Endothelial cell of umbilical vein (primary cell): ENCODE measurements at regions of chr19 and their contacts with region 1.

Region 1: DNA sequence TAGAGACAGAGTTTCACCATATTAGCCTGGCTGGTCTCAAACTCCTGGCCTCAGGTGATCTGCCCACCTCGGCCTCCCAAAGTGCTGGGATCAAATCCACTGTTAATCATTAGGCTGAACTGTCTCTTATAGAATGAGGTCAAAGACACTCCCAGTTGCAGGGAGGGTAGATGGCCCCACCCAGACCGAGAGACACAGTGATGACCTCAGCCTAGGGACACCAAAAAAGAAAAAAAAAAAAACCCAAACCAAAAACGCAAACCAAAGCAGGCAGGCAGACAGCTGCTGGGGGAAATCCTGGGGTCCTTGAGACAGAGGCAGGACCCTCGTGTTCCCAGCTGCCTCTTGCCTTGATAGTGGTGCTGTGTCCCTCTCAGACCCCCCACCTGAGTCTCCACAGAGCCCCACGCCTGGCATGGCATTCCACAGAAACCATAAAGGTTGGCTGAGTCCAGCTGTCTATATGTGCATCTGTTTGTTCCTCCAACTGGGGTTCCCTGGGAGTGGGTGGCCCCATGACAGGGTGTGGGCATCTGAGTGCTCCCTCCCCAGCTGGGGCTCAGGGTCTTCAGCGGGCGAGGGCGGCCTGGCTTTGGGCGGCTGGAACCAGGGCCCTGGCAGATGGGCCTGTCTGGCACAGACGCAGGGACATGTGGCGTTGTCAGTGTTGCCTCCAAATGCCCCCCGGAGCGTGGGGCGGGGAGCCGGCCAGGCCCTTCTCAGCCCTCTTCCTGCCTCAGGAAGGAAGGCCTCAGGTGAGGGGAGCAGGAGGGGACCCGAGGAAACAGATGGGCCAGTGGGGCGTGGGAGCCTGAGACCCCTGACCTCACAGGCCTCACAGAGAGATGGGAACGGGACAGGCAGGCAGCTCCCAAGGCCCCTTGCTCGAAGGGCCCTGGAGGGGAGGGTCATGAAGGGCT is 5.2 kb downstream of the DAND5 start:
- DNase-seq: no peak
- H3K4me3 ChIP-seq: no peak overlapping the region
- H3K27ac ChIP-seq: no peak overlapping the region
- H3K4me1 ChIP-seq: no peaks in the 10 kb centered on the region
- H3K27me3 ChIP-seq: no peaks in the 10 kb centered on the region
- CTCF ChIP-seq: no peak
- POLR2A ChIP-seq: no peak

Region 2: GRCh38 chr19:13022859-13023636 is 48.5 kb after region 1 on chr19:
- CTCF ChIA-PET with region 1: interaction called, 13 read pairs
- POLR2A ChIA-PET with region 1: no interaction called
- dilution Hi-C with region 1: no loop called
- intact Hi-C with region 1: no loop called
- DNase-seq: peak; percentile 80
- H3K4me3 ChIP-seq: peak overlapping the region; percentile 28 to 84 (median 59)
- H3K27ac ChIP-seq: peak overlapping the region; percentile 33
- H3K4me1 ChIP-seq: peaks cover 52% of the 10 kb centered on the region
- H3K27me3 ChIP-seq: no peaks in the 10 kb centered on the region
- CTCF ChIP-seq: no peak
- POLR2A ChIP-seq: peak; percentile 31

Region 3: GRCh38 chr19:13082192-13083007 is 107.8 kb after region 1 on chr19:
- CTCF ChIA-PET with region 1: interaction called, 76 read pairs
- POLR2A ChIA-PET with region 1: no interaction called
- dilution Hi-C with region 1: no loop called
- intact Hi-C with region 1: loop called (anchors 1 kb)
- DNase-seq: peak; percentile 57
- H3K4me3 ChIP-seq: no peak overlapping the region
- H3K27ac ChIP-seq: no peak overlapping the region
- H3K4me1 ChIP-seq: peaks cover 4% of the 10 kb centered on the region
- H3K27me3 ChIP-seq: no peaks in the 10 kb centered on the region
- CTCF ChIP-seq: peak; percentile 39 to 60
- POLR2A ChIP-seq: no peak

Region 4: DNA sequence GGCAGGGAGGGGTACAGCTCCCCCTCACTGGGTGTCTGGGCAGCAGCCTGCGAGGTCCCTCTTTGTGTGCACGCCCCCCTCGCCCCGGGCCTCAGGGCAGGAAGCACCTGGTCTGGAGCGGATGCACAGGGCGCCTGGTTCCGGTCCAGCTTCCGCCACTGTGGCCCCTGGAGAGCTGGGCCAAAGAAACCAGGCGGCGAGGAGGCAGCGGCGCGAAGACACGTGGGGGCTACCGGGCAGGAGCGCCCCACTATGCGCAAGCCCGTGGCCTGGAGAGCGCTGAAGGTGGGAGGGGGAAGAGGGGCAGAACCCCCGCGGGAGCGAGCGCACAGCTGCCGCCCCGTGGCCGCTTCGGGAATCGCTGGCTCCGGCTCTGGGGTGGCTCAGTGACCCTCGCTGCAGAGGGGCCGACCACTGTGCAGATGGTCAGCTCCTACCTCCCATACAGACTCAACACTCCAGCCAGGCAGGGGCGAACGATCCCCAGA is 129.8 kb after region 1 on chr19:
- CTCF ChIA-PET with region 1: interaction called, 22 read pairs
- POLR2A ChIA-PET with region 1: no interaction called
- dilution Hi-C with region 1: no loop called
- intact Hi-C with region 1: no loop called
- DNase-seq: peak; percentile 94
- H3K4me3 ChIP-seq: no peak overlapping the region
- H3K27ac ChIP-seq: peak overlapping the region; percentile 60
- H3K4me1 ChIP-seq: peaks cover 41% of the 10 kb centered on the region
- H3K27me3 ChIP-seq: no peaks in the 10 kb centered on the region
- CTCF ChIP-seq: peak; percentile 85 to 95
- POLR2A ChIP-seq: peak; percentile 80

Region 5: GRCh38 chr19:13588957-13589833 is 614.6 kb after region 1 on chr19:
- CTCF ChIA-PET with region 1: interaction called, 22 read pairs
- POLR2A ChIA-PET with region 1: no interaction called
- dilution Hi-C with region 1: no loop called
- intact Hi-C with region 1: no loop called
- DNase-seq: peak; percentile 55
- H3K4me3 ChIP-seq: no peak overlapping the region
- H3K27ac ChIP-seq: no peak overlapping the region
- H3K4me1 ChIP-seq: no peaks in the 10 kb centered on the region
- H3K27me3 ChIP-seq: no peaks in the 10 kb centered on the region
- CTCF ChIP-seq: peak; percentile 96 to 99
- POLR2A ChIP-seq: no peak